ENCODE measurements at regions of chr5 and their contacts with region 1.

Region 1: DNA sequence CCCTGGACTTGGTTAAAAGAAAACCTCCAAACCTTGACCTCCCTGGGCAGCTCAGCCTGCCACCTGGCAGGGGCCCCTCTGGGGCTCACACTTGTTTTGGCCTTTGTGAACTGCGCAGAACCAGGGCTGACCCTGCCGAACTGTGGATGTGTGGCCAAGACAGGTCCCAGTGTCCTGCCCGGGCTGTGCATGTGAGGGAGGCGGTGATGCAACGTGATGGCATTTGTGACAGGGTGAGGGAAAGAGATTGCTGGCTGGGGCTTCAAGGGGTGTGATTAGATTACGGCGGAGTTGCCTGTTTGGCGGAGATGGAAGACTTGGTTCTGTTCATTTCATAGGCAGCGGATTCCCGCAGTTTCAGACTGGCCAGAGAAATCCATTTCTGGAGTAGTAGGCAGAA is 30.4 kb upstream of the NKX2-5 start:
- DNase-seq: peak; percentile 80
- ATAC-seq: peak; percentile 87

Region 2: GRCh38 chr5:173217626-173218397 is 47.6 kb before region 1 on chr5:
- intact Hi-C with region 1: no loop called
- DNase-seq: no peak
- ATAC-seq: peak; percentile 23

Region 3: GRCh38 chr5:173245319-173246134 is 19.9 kb before region 1 on chr5:
- intact Hi-C with region 1: loop called (anchors 2 kb)
- DNase-seq: no peak
- ATAC-seq: peak; percentile 55

Measured in Right ventricle myocardium inferior (tissue), 1 donor.